Endothelial cell of umbilical vein (primary cell): ENCODE measurements at regions of chr7 and their contacts with region 1.

Region 1: DNA sequence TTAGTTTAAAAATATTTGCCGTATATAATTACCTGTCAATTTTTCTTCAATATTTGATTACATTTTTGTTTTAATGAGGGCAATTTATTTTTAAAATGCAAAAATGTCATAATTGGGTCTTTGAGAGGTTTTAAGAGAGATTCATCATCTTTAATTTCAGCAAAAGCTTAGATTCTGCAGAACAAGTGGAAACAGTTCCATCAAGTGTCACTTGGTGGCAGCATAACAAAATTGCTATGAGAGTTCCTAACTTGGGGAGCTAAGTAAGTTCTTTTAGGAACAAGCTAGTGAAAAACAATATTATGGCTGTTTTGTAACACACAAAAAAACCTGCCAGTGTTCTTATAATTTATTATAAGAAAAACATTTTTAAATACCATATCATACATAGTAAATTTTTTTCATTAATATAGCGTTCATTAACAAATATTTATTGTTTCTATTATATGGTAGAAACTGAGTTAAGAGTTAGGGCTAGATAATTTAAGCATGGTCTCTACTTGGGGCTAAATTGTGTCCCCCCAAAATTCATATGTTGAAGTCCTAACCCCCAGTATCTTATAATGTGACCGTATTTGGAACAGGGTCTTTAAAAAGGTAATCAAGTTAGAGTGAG is 155.2 kb downstream of the MAGI2 start:
- DNase-seq: peak; percentile 75
- H3K4me3 ChIP-seq: no peak overlapping the region
- H3K27ac ChIP-seq: no peak overlapping the region
- H3K4me1 ChIP-seq: no peaks in the 10 kb centered on the region
- H3K27me3 ChIP-seq: no peaks in the 10 kb centered on the region
- CTCF ChIP-seq: peak; percentile 41 to 56
- POLR2A ChIP-seq: no peak

Region 2: DNA sequence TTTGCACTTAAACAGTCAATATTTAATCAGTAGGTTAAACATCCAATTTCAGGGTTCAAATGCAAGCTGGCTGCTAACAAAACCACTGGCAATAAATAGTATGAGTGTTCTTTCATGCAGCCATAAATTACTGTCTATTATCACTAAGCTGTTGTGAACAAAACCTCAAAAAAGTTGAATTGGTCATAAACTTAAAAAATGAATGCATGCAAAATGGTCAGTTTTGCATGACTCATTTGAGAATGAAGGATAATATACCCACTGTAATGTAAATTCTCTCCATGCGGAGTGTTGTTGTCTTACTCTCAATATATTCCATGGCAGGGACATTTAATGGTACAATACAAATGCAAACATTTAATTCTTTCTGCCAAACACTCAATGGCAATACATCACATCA is 71.2 kb before region 1 on chr7:
- CTCF ChIA-PET with region 1: no interaction called
- POLR2A ChIA-PET with region 1: no interaction called
- dilution Hi-C with region 1: no loop called
- intact Hi-C with region 1: no loop called
- DNase-seq: no peak
- H3K4me3 ChIP-seq: no peak overlapping the region
- H3K27ac ChIP-seq: no peak overlapping the region
- H3K4me1 ChIP-seq: no peaks in the 10 kb centered on the region
- H3K27me3 ChIP-seq: no peaks in the 10 kb centered on the region
- CTCF ChIP-seq: no peak
- POLR2A ChIP-seq: no peak

Region 3: DNA sequence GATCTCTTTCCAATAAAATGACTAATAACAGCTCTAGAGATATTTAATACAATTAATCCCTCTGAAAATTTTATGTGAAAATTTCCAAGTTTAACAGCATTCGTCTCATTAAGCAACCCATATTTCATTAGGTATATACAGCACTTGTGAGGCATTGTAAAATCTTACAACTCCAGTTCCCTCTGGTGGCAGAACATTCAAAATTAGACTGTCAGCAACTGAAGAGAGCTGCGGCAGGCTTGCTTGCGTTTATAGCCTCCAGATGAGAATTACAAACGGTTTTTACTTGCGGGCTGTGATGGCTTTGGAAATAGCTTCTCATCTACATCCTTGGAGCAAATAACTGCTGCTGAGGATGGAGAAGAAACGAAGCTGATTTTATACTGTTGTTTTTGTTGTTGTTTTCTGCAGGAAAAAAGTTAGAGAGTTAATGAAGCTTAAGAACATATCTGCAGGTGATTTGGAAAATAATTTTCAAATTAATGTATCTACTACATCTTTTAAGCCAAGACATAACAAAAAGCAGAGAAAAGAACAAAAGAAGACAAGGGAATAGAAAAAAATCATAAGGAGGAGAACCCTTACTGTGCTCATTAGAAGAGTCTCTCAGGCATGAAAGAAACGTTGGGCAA is 16.1 kb before region 1 on chr7:
- CTCF ChIA-PET with region 1: interaction called, 40 read pairs
- POLR2A ChIA-PET with region 1: no interaction called
- dilution Hi-C with region 1: no loop called
- intact Hi-C with region 1: no loop called
- DNase-seq: peak; percentile 68
- H3K4me3 ChIP-seq: no peak overlapping the region
- H3K27ac ChIP-seq: peak overlapping the region; percentile 90
- H3K4me1 ChIP-seq: peaks cover 22% of the 10 kb centered on the region
- H3K27me3 ChIP-seq: no peaks in the 10 kb centered on the region
- CTCF ChIP-seq: peak; percentile 26
- POLR2A ChIP-seq: no peak

Region 4: DNA sequence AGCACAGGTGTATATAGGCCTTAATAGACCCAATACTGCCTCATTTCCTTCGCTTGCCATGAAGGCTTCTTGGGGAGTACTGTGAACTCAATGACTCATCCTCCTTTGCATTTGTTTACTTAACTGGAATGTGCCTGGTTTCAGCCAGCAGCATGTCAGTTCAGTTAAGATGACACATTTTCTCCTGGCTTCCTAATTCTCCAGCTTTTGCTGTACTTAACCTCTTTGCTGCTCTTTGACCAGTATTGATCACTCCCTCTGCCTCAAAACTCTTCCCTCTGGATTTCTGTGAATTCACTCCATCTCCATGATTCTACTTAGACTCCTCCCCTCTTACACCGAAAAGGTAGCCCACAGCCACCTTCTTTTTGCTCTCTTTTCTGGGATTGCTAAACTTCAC is 19.5 kb after region 1 on chr7:
- CTCF ChIA-PET with region 1: interaction called, 11 read pairs
- POLR2A ChIA-PET with region 1: no interaction called
- dilution Hi-C with region 1: no loop called
- intact Hi-C with region 1: no loop called
- DNase-seq: peak; percentile 77
- H3K4me3 ChIP-seq: no peak overlapping the region
- H3K27ac ChIP-seq: no peak overlapping the region
- H3K4me1 ChIP-seq: peaks cover 8% of the 10 kb centered on the region
- H3K27me3 ChIP-seq: no peaks in the 10 kb centered on the region
- CTCF ChIP-seq: no peak
- POLR2A ChIP-seq: no peak

Region 5: GRCh38 chr7:79622781-79623180 is 324.5 kb after region 1 on chr7:
- CTCF ChIA-PET with region 1: interaction called, 4 read pairs
- POLR2A ChIA-PET with region 1: no interaction called
- dilution Hi-C with region 1: no loop called
- intact Hi-C with region 1: loop called (anchors 10 kb)
- DNase-seq: peak; percentile 87
- H3K4me3 ChIP-seq: no peak overlapping the region
- H3K27ac ChIP-seq: no peak overlapping the region
- H3K4me1 ChIP-seq: peaks cover 25% of the 10 kb centered on the region
- H3K27me3 ChIP-seq: no peaks in the 10 kb centered on the region
- CTCF ChIP-seq: no peak
- POLR2A ChIP-seq: no peak

Region 6: DNA sequence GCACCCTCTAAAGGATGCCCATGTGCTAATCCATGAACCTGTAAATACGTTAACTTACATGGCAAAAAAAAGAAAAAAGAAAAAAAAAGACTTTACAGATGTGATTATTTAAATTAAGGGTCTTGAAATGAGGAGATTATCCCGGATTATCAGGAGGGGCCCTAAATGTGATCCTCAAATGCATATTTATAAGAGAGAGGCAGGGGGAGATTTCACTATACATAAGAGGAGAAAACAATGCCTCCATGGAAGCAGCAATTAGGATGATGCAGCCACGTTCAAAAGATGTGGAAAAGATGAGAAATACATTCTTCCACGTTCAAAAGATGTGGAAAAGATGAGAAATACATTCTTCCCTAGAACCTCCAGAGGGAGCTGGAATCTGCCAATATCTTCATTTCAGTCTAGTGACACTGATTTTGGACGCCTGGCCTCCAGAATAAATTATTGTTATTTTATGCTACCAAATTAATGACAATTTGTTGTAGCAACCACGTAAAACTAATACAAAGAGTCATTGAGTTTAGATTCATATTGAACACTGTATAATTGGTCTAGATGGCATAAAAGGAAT is 508.0 kb after region 1 on chr7:
- CTCF ChIA-PET with region 1: interaction called, 11 read pairs
- POLR2A ChIA-PET with region 1: no interaction called
- dilution Hi-C with region 1: no loop called
- intact Hi-C with region 1: no loop called
- DNase-seq: peak; percentile 17
- H3K4me3 ChIP-seq: no peak overlapping the region
- H3K27ac ChIP-seq: no peak overlapping the region
- H3K4me1 ChIP-seq: no peaks in the 10 kb centered on the region
- H3K27me3 ChIP-seq: no peaks in the 10 kb centered on the region
- CTCF ChIP-seq: no peak
- POLR2A ChIP-seq: no peak

Region 7: DNA sequence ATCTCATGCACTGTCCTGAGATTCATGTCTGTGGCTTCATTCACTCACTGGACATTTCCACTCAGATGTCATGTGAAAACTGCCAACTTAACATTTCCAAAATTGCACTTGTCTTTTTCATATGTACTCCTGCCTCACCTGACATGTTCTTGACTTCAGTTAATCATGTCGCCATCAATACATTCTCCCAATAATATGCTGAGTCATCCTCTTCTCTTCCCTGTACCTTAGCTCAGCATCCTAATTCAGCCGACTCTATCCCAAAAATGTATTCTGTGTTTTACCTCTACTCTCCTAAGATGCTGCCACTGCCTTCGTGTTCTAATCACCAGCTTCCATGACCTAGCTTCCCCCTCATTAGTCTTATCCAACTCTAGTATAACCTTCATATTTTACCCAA is 742.5 kb after region 1 on chr7:
- CTCF ChIA-PET with region 1: interaction called, 131 read pairs
- POLR2A ChIA-PET with region 1: no interaction called
- dilution Hi-C with region 1: no loop called
- intact Hi-C with region 1: no loop called
- DNase-seq: no peak
- H3K4me3 ChIP-seq: no peak overlapping the region
- H3K27ac ChIP-seq: no peak overlapping the region
- H3K4me1 ChIP-seq: no peaks in the 10 kb centered on the region
- H3K27me3 ChIP-seq: no peaks in the 10 kb centered on the region
- CTCF ChIP-seq: no peak
- POLR2A ChIP-seq: no peak